Activated naive CD4-positive, alpha-beta T cell treated with anti-CD3 and anti-CD28 coated beads, Interleukin-2, amount 10 ng/mL, durations not matched to agents 7 days and 5 days (primary cell): ENCODE measurements at regions of chr2 and their contacts with region 1.

Region 1: GRCh38 chr2:119641562-119642258 is 37.3 kb upstream of the TMEM177 start:
- DNase-seq: peak; percentile 81
- H3K4me3 Mint-ChIP-seq: no peak overlapping the region
- H3K27ac Mint-ChIP-seq: no peak overlapping the region
- H3K4me1 Mint-ChIP-seq: no peaks in the 10 kb centered on the region
- H3K27me3 Mint-ChIP-seq: peaks cover 17% of the 10 kb centered on the region

Region 2: GRCh38 chr2:119659601-119660342 is 18.1 kb after region 1 on chr2:
- CTCF ChIA-PET with region 1: interaction called, 53 read pairs
- DNase-seq: peak; percentile 52
- H3K4me3 Mint-ChIP-seq: no peak overlapping the region
- H3K27ac Mint-ChIP-seq: no peak overlapping the region
- H3K4me1 Mint-ChIP-seq: peaks cover 15% of the 10 kb centered on the region
- H3K27me3 Mint-ChIP-seq: peaks cover 11% of the 10 kb centered on the region